ENCODE measurements at regions of chr19 and their contacts with region 1.

Region 1: GRCh38 chr19:1336079-1336684 is 47.5 kb upstream of the NDUFS7 start:
- DNase-seq: no peak
- ATAC-seq: no peak
- H3K4me3 ChIP-seq: no peak overlapping the region
- H3K27ac ChIP-seq: no peak overlapping the region
- H3K4me1 ChIP-seq: no peaks in the 10 kb centered on the region
- H3K27me3 ChIP-seq: no peaks in the 10 kb centered on the region

Region 2: DNA sequence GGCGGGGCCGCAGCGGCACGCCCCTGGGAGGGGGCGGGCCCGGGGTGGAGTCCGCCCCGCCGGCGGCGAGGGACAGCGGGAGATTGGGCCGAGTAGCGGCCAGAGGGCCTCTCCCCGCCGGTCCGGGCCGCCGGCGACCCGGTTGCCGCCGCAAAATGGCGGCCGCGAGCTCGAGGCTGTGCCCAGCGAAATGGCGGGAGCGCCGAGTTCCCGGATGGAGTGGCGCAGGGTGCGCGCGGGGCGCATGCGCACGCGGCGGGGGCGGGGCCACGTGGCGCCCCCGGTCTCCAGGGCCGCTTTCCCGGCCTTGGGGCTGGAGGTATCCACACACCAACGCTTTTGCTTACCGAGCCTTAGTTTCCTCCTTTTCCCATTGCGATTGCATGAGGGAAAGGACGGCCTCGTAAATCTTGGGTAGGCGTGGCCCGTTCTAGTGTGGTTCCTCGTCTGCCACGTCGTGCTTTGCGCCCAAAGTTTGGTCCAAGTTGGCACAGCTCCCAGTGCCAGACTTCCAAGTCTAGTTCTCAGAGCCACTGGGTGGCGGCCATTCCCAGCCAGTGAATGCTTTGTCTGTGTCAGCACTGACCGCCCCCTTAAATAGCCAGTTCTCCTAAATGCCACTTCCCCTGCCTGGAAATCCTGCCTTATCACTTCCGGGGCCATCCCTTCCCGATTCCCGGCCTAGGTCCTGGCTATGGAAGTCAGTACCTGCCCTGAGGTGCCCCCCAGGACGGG is 66.5 kb before region 1 on chr19:
- intact Hi-C with region 1: no loop called
- DNase-seq: peak; percentile 94 to 96 (median 95)
- ATAC-seq: peak; percentile 11 to 34
- H3K4me3 ChIP-seq: peak overlapping the region; percentile 82
- H3K27ac ChIP-seq: peak overlapping the region; percentile 98
- H3K4me1 ChIP-seq: peaks cover 15% of the 10 kb centered on the region
- H3K27me3 ChIP-seq: no peaks in the 10 kb centered on the region

Region 3: GRCh38 chr19:1279782-1280341 is 56.3 kb before region 1 on chr19:
- intact Hi-C with region 1: no loop called
- DNase-seq: peak; percentile 80 to 94 (median 94)
- ATAC-seq: peak; percentile 17 to 24
- H3K4me3 ChIP-seq: no peak overlapping the region
- H3K27ac ChIP-seq: no peak overlapping the region
- H3K4me1 ChIP-seq: peaks cover 1% of the 10 kb centered on the region
- H3K27me3 ChIP-seq: no peaks in the 10 kb centered on the region

Region 4: DNA sequence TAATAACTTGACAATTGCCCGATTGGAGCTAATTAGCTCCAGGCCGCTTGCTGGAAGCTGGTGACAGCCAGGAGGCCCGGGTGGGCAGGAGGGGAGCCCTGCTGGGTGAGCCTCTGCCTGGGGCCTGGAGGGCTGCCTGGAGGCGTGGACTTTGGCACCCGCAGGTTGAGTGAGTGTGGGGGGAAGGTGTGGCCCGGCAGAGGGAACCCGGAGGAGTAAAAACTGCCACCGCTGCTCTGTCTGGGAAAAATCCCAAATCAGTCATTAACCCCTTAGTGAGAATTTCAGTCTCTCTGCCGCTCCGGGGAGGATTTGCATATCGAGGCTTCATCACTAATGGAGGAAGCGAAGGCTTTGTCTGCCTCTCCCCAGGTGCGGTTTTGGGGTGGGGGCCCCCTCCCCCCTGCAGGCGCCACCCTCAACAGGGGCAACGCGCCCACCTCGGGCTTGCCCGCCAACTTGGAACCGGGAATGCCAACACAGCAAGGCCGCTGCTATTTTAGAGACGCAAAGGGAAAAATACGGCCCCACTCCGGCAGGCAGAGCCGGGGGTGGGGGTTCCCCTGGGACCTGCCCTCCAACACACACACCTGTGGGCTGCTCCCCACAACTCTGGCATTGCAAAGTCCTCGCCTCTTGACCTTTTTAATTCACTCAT is 44.3 kb before region 1 on chr19:
- intact Hi-C with region 1: loop called in 1 of 4 experiments (anchors 5 kb)
- DNase-seq: no peak
- ATAC-seq: no peak
- H3K4me3 ChIP-seq: no peak overlapping the region
- H3K27ac ChIP-seq: no peak overlapping the region
- H3K4me1 ChIP-seq: no peaks in the 10 kb centered on the region
- H3K27me3 ChIP-seq: no peaks in the 10 kb centered on the region